Caco-2 (cell line): ENCODE measurements at regions of chr2 and their contacts with region 1.

Region 1: GRCh38 chr2:42663106-42663780 is 94.8 kb downstream of the MTA3 start:
- DNase-seq: peak; percentile 76 to 78
- H3K4me3 ChIP-seq: no peak overlapping the region
- H3K4me3 Mint-ChIP-seq: no peak overlapping the region
- H3K27ac Mint-ChIP-seq: no peak overlapping the region
- H3K4me1 ChIP-seq: no peaks in the 10 kb centered on the region
- H3K4me1 Mint-ChIP-seq: peaks cover 2% of the 10 kb centered on the region
- H3K27me3 ChIP-seq: no peaks in the 10 kb centered on the region
- H3K27me3 Mint-ChIP-seq: no peaks in the 10 kb centered on the region
- CTCF ChIP-seq: peak; percentile 97 to 99

Region 2: GRCh38 chr2:42360890-42361727 is 302.1 kb before region 1 on chr2 and contains the start of gene COX7A2L:
- CTCF ChIA-PET with region 1: no interaction called
- POLR2A ChIA-PET with region 1: no interaction called
- intact Hi-C with region 1: no loop called
- DNase-seq: peak; percentile 98
- H3K4me3 ChIP-seq: peak within 1 kb of the TSS; percentile 91
- H3K4me3 Mint-ChIP-seq: peak within 1 kb of the TSS; percentile 89
- H3K27ac Mint-ChIP-seq: peak within 1 kb of the TSS; percentile 97
- H3K4me1 ChIP-seq: peaks cover 8% of the 10 kb centered on the region; the same call in 1 of the 2 replicates
- H3K4me1 Mint-ChIP-seq: peaks cover 15% of the 10 kb centered on the region
- H3K27me3 ChIP-seq: no peaks in the 10 kb centered on the region
- H3K27me3 Mint-ChIP-seq: no peaks in the 10 kb centered on the region
- CTCF ChIP-seq: peak in 1 of 2 experiments; percentile 39
- total RNA-seq, gene COX7A2L: 117 and 125 TPM in 2 replicates

Region 3: GRCh38 chr2:42386684-42387083 is 276.6 kb before region 1 on chr2:
- CTCF ChIA-PET with region 1: interaction called, 4 read pairs
- POLR2A ChIA-PET with region 1: no interaction called
- intact Hi-C with region 1: loop called (anchors 2 kb)
- DNase-seq: no peak
- H3K4me3 ChIP-seq: no peak overlapping the region
- H3K4me3 Mint-ChIP-seq: no peak overlapping the region
- H3K27ac Mint-ChIP-seq: no peak overlapping the region
- H3K4me1 ChIP-seq: no peaks in the 10 kb centered on the region
- H3K4me1 Mint-ChIP-seq: no peaks in the 10 kb centered on the region
- H3K27me3 ChIP-seq: 0 out of 2 replicates have a peak, but pooled peaks cover 1% of the 10 kb centered on the region
- H3K27me3 Mint-ChIP-seq: no peaks in the 10 kb centered on the region
- CTCF ChIP-seq: peak; percentile 40 to 43

Region 4: GRCh38 chr2:42494355-42495233 is 168.6 kb before region 1 on chr2:
- CTCF ChIA-PET with region 1: interaction called, 4 read pairs
- POLR2A ChIA-PET with region 1: no interaction called
- intact Hi-C with region 1: loop called (anchors 1 kb)
- DNase-seq: peak; percentile 80 to 86
- H3K4me3 ChIP-seq: peak overlapping the region; percentile 48
- H3K4me3 Mint-ChIP-seq: peak overlapping the region; percentile 98
- H3K27ac Mint-ChIP-seq: peak overlapping the region; percentile 21
- H3K4me1 ChIP-seq: no peaks in the 10 kb centered on the region
- H3K4me1 Mint-ChIP-seq: no peaks in the 10 kb centered on the region
- H3K27me3 ChIP-seq: no peaks in the 10 kb centered on the region
- H3K27me3 Mint-ChIP-seq: no peaks in the 10 kb centered on the region
- CTCF ChIP-seq: peak; percentile 91 to 94

Region 5: GRCh38 chr2:42513257-42513918 is 149.9 kb before region 1 on chr2:
- CTCF ChIA-PET with region 1: interaction called, 10 read pairs
- POLR2A ChIA-PET with region 1: no interaction called
- intact Hi-C with region 1: loop called (anchors 1 kb)
- DNase-seq: peak; percentile 42 to 71
- H3K4me3 ChIP-seq: no peak overlapping the region
- H3K4me3 Mint-ChIP-seq: no peak overlapping the region
- H3K27ac Mint-ChIP-seq: no peak overlapping the region
- H3K4me1 ChIP-seq: no peaks in the 10 kb centered on the region
- H3K4me1 Mint-ChIP-seq: peaks cover 6% of the 10 kb centered on the region
- H3K27me3 ChIP-seq: no peaks in the 10 kb centered on the region
- H3K27me3 Mint-ChIP-seq: no peaks in the 10 kb centered on the region
- CTCF ChIP-seq: peak; percentile 65 to 67

Region 6: GRCh38 chr2:42562474-42563144 is 100.6 kb before region 1 on chr2:
- CTCF ChIA-PET with region 1: interaction called, 5 read pairs
- POLR2A ChIA-PET with region 1: no interaction called
- intact Hi-C with region 1: loop called (anchors 5 kb)
- DNase-seq: peak; percentile 87 to 90
- H3K4me3 ChIP-seq: no peak overlapping the region
- H3K4me3 Mint-ChIP-seq: peak overlapping the region; percentile 27
- H3K27ac Mint-ChIP-seq: peak overlapping the region; percentile 60
- H3K4me1 ChIP-seq: peaks cover 47% of the 10 kb centered on the region
- H3K4me1 Mint-ChIP-seq: peaks cover 42% of the 10 kb centered on the region
- H3K27me3 ChIP-seq: no peaks in the 10 kb centered on the region
- H3K27me3 Mint-ChIP-seq: no peaks in the 10 kb centered on the region
- CTCF ChIP-seq: no peak

Region 7: GRCh38 chr2:42639340-42640077 is 23.7 kb before region 1 on chr2:
- CTCF ChIA-PET with region 1: no interaction called
- POLR2A ChIA-PET with region 1: no interaction called
- intact Hi-C with region 1: no loop called
- DNase-seq: no peak
- H3K4me3 ChIP-seq: no peak overlapping the region
- H3K4me3 Mint-ChIP-seq: no peak overlapping the region
- H3K27ac Mint-ChIP-seq: no peak overlapping the region
- H3K4me1 ChIP-seq: no peaks in the 10 kb centered on the region
- H3K4me1 Mint-ChIP-seq: no peaks in the 10 kb centered on the region
- H3K27me3 ChIP-seq: no peaks in the 10 kb centered on the region
- H3K27me3 Mint-ChIP-seq: no peaks in the 10 kb centered on the region
- CTCF ChIP-seq: no peak

Region 8: DNA sequence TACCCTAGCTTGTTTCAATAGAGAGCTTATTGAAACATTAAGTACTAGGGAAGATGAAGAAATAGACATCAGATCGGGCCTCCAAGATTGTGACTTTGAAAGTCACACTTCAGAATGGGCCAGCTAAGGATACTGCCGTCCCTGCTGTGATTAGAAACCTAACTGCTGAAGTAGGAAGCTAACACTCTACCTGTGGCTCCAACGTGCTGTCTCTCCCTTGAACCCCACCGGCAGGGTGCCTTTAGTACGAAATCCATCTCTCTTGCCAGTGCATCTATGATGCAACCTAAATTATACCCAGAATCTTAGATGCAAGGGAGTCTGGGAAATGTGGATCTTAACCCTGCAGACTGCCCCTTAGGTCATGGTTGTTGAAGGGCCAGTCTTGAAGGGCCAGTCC is 22.1 kb after region 1 on chr2:
- CTCF ChIA-PET with region 1: no interaction called
- POLR2A ChIA-PET with region 1: no interaction called
- intact Hi-C with region 1: no loop called
- DNase-seq: no peak
- H3K4me3 ChIP-seq: no peak overlapping the region
- H3K4me3 Mint-ChIP-seq: no peak overlapping the region
- H3K27ac Mint-ChIP-seq: no peak overlapping the region
- H3K4me1 ChIP-seq: no peaks in the 10 kb centered on the region
- H3K4me1 Mint-ChIP-seq: no peaks in the 10 kb centered on the region
- H3K27me3 ChIP-seq: no peaks in the 10 kb centered on the region
- H3K27me3 Mint-ChIP-seq: no peaks in the 10 kb centered on the region
- CTCF ChIP-seq: no peak